A549 (cell line): ENCODE measurements at regions of chr12 and their contacts with region 1.

Region 1: DNA sequence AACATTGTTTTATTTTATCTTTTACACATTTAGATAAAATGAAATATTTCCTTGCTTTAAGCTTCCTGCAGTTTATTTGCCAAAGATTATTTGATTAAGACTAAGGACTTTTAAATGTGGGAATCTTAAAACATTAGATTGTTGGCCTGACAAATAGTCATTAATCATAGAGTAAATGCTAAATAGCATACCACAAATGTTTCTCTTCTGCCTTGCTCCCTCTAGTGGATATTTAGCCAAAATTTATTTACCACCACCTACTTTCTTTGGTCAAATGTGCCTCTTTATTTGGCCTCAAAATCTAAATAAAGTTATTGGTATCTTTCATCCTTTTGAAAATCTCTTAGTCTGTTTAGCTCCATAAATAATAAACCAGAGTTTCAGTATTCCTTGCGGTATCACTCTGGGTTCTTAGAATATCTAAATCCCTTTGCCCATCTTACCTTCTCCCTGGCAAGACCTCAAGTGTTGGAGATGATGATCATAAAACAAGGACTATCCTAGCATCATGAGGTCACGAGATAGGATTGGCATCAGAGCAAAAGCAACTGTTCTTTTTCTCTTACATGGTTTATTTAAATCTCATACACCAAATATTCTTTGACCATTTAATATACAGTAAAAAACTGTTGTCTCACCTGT is 150.6 kb upstream of the AEBP2 start:
- DNase-seq: peak; percentile 38 to 48
- ATAC-seq: peak; percentile 43 to 72; a peak in 4 of 6 replicates
- H3K4me3 ChIP-seq: no peak overlapping the region
- H3K27ac ChIP-seq: no peak overlapping the region
- H3K4me1 ChIP-seq: no peaks in the 10 kb centered on the region
- CTCF ChIP-seq: peak; percentile 73
- EP300 ChIP-seq: no peak
- POLR2A ChIP-seq: no peak
- RAD21 ChIP-seq: peak; percentile 64 to 67

Region 2: DNA sequence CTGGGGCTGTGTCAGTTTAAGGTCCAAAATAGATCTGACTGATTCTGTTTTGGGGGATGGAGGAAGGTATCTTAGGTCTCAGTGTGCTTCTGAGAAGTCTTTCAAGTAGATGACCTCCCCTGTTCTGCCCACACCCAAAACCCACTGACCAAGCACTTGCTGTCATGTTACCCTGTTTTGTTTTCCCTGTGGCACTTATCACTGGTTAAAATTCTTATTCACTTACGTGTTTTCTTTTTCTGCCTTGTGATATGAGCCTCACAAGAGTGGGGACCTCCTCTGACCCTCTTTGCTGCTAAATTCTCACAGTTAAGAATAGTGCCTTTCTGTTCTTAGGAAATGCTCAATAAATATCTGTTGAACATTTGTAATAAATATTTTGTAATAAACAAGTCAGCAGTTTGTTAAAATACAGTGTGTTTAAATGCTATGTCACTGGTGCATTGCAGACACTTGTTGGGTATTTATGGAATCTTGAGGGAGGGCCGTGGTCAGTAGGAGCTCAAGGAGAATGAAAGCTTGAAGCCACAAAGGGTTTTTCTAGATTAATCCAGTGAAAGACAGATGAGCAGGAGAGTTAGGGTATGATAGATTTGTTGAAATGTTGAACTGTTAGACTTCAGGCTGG is 138.3 kb before region 1 on chr12:
- CTCF ChIA-PET with region 1: no interaction called
- POLR2A ChIA-PET with region 1: no interaction called
- DNase-seq: no peak
- ATAC-seq: no peak
- H3K4me3 ChIP-seq: no peak overlapping the region
- H3K27ac ChIP-seq: no peak overlapping the region
- H3K4me1 ChIP-seq: peaks cover 15% of the 10 kb centered on the region; the same call in 1 of the 3 replicates
- CTCF ChIP-seq: no peak
- EP300 ChIP-seq: no peak
- POLR2A ChIP-seq: no peak
- RAD21 ChIP-seq: no peak

Region 3: GRCh38 chr12:19263672-19264071 is 25.1 kb before region 1 on chr12:
- CTCF ChIA-PET with region 1: no interaction called
- POLR2A ChIA-PET with region 1: no interaction called
- DNase-seq: no peak
- ATAC-seq: no peak
- H3K4me3 ChIP-seq: no peak overlapping the region
- H3K27ac ChIP-seq: no peak overlapping the region
- H3K4me1 ChIP-seq: no peaks in the 10 kb centered on the region
- CTCF ChIP-seq: no peak
- EP300 ChIP-seq: no peak
- POLR2A ChIP-seq: no peak
- RAD21 ChIP-seq: no peak

Region 4: GRCh38 chr12:19299765-19300164 is 11.0 kb after region 1 on chr12:
- CTCF ChIA-PET with region 1: interaction called, 14 read pairs
- POLR2A ChIA-PET with region 1: no interaction called
- DNase-seq: no peak
- ATAC-seq: no peak
- H3K4me3 ChIP-seq: no peak overlapping the region
- H3K27ac ChIP-seq: no peak overlapping the region
- H3K4me1 ChIP-seq: no peaks in the 10 kb centered on the region
- CTCF ChIP-seq: no peak
- EP300 ChIP-seq: no peak
- POLR2A ChIP-seq: no peak
- RAD21 ChIP-seq: no peak

Region 5: GRCh38 chr12:19322376-19322775 is 33.7 kb after region 1 on chr12:
- CTCF ChIA-PET with region 1: no interaction called
- POLR2A ChIA-PET with region 1: no interaction called
- DNase-seq: no peak
- ATAC-seq: no peak
- H3K4me3 ChIP-seq: no peak overlapping the region
- H3K27ac ChIP-seq: no peak overlapping the region
- H3K4me1 ChIP-seq: no peaks in the 10 kb centered on the region
- CTCF ChIP-seq: no peak
- EP300 ChIP-seq: no peak
- POLR2A ChIP-seq: no peak
- RAD21 ChIP-seq: no peak

Region 6: GRCh38 chr12:19529951-19530635 is 241.4 kb after region 1 on chr12:
- CTCF ChIA-PET with region 1: no interaction called
- POLR2A ChIA-PET with region 1: no interaction called
- DNase-seq: no peak
- ATAC-seq: no peak; a peak in 1 of 6 replicates
- H3K4me3 ChIP-seq: no peak overlapping the region
- H3K27ac ChIP-seq: peak overlapping the region in 1 of 2 experiments; percentile 33; a peak in 1 of 6 replicates
- H3K4me1 ChIP-seq: peaks cover 19% of the 10 kb centered on the region
- CTCF ChIP-seq: no peak
- EP300 ChIP-seq: no peak
- POLR2A ChIP-seq: no peak
- RAD21 ChIP-seq: no peak